Aorta (tissue), 5 donors: ENCODE measurements at regions of chr17 and their contacts with region 1.

Region 1: GRCh38 chr17:45060797-45061605 is at the start of gene NMT1:
- DNase-seq: peak; percentile 98
- ATAC-seq: peak; percentile 99
- H3K4me3 ChIP-seq: peak within 1 kb of the TSS; percentile 79 to 95
- H3K27ac ChIP-seq: peak within 1 kb of the TSS; percentile 34 to 94
- H3K4me1 ChIP-seq: peaks cover 0 to 3% of the 10 kb centered on the region in 2 donors
- H3K27me3 ChIP-seq: no peaks in the 10 kb centered on the region
- total RNA-seq, gene NMT1: 103 to 104 TPM

Region 2: GRCh38 chr17:45092932-45093430 is 32.0 kb after region 1 on chr17:
- intact Hi-C with region 1: loop called (anchors 2 to 5 kb)
- DNase-seq: peak; percentile 92
- ATAC-seq: peak; percentile 98
- H3K4me3 ChIP-seq: no peak overlapping the region
- H3K27ac ChIP-seq: peak overlapping the region; percentile 62 to 66
- H3K4me1 ChIP-seq: peaks cover 2 to 5% of the 10 kb centered on the region in 2 donors
- H3K27me3 ChIP-seq: no peaks in the 10 kb centered on the region

Region 3: DNA sequence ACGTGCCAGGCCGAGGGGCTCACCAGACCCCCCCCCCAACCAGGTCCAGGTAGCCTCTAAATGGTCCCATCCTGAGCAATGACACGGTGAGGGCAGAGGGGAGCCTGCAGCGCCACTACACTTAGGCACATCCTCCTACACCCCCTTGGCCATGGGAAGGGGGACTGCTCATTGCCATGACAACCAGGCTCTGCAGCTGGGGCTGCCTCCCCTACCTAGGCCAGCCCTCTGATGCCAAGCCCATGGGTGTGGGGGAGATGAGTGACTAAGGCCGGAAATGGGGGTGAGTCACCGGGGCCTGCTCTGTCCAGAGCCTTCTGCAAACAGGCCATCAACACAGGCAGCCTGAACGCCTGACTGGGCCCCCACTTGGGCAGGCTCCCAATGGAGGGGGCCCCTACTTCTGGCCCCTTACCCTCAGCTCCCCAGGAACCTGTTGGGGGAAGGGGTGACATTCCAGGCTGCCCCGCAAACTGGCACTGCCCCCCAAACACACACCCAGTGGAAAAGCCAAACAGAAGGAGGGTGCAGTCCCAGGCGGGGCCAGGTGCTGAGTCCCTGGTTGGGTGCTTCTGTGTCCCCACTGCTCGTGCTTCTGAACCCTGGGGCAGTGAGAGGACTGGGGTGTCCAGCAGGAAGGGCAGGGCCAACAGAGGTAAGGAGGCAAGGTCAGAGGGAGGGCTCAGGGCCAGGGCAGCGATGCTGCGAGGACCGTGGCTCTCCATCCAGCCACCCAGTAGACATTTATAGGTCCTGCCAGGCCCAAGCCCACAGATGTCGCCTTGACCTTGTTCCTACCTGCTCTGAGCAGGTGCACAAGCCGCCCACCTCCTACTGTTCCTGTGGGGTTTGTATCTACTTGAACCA is 63.2 kb after region 1 on chr17:
- intact Hi-C with region 1: loop called in 1 of 2 experiments (anchors 2 kb)
- DNase-seq: peak; percentile 91 to 93
- ATAC-seq: peak; percentile 71
- H3K4me3 ChIP-seq: no peak overlapping the region
- H3K27ac ChIP-seq: peak overlapping the region in 1 of 2 donors; percentile 19
- H3K4me1 ChIP-seq: peaks cover 0 to 3% of the 10 kb centered on the region in 2 donors
- H3K27me3 ChIP-seq: no peaks in the 10 kb centered on the region